Activated naive CD4-positive, alpha-beta T cell treated with anti-CD3 and anti-CD28 coated beads for 36 hours (primary cell): ENCODE measurements at regions of chr10 and their contacts with region 1.

Region 1: GRCh38 chr10:129971381-129972144 is 7.5 kb upstream of the EBF3 start:
- DNase-seq: peak; percentile 62
- H3K4me3 Mint-ChIP-seq: peak overlapping the region; percentile 52
- H3K27ac Mint-ChIP-seq: no peak overlapping the region
- H3K4me1 Mint-ChIP-seq: peaks cover 21% of the 10 kb centered on the region
- H3K27me3 Mint-ChIP-seq: peaks cover 66% of the 10 kb centered on the region

Region 2: DNA sequence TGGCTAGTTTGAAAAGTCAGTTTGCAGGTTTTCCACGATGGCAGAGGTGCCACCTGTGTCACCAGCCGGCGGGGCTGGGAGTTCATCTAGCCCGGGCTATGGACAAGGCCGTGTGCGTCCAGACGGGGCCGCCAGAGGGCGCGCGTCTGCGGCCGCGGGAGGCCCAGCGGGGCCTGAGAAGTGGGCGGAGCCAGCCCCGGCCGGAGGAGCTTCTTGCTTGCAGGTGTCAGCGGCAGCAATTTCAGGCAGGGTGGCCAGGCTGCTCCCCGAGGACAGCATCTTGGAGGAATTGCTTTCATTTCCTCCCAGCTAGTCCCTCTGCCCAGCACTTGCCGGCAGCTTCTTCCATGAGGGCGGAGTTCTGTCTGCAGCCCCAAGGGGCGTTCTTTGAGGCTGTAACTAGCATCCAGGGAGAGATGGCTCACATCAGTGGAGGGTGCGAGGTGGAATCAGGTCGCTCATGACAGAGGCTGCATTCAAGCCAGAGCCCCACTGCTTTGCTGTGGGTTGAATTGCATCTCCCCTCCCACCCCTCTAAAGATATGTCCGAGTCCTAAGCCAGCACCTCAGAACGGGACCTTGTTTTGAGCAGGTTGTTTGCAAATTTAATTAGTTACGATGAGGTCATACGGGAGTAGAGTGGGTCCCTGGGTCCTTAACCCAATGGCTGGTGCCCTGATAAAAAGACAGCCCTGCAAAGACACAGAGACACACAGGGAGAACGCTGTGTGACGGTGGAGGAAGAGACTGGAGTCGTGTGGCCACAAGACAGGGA is 1759.4 kb before region 1 on chr10:
- CTCF ChIA-PET with region 1: no interaction called
- intact Hi-C with region 1: loop called (anchors 5 kb)
- DNase-seq: peak; percentile 80
- H3K4me3 Mint-ChIP-seq: peak overlapping the region; percentile 64
- H3K27ac Mint-ChIP-seq: no peak overlapping the region
- H3K4me1 Mint-ChIP-seq: peaks cover 4% of the 10 kb centered on the region
- H3K27me3 Mint-ChIP-seq: no peaks in the 10 kb centered on the region

Region 3: DNA sequence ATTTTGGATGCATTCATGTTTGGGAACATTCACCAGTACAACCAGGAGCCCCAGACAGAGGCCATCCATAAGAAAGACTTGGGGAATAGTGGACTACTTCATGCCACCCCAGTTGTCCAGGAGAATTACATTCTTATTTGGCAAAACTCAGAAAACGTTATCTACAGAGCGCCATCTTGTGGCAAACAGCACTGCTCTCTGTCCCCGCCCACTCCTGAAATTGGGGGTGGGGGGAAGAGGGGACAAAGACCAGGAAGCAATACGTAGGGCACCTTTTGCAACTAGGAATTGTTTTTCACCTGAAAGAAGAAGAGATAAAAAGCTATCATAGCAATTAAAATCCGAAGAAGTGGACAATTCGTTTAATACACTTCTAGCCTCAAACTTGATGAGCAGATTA is 639.1 kb before region 1 on chr10:
- CTCF ChIA-PET with region 1: no interaction called
- intact Hi-C with region 1: loop called (anchors 5 kb)
- DNase-seq: peak; percentile 44
- H3K4me3 Mint-ChIP-seq: no peak overlapping the region
- H3K27ac Mint-ChIP-seq: no peak overlapping the region
- H3K4me1 Mint-ChIP-seq: peaks cover 8% of the 10 kb centered on the region
- H3K27me3 Mint-ChIP-seq: no peaks in the 10 kb centered on the region

Region 4: DNA sequence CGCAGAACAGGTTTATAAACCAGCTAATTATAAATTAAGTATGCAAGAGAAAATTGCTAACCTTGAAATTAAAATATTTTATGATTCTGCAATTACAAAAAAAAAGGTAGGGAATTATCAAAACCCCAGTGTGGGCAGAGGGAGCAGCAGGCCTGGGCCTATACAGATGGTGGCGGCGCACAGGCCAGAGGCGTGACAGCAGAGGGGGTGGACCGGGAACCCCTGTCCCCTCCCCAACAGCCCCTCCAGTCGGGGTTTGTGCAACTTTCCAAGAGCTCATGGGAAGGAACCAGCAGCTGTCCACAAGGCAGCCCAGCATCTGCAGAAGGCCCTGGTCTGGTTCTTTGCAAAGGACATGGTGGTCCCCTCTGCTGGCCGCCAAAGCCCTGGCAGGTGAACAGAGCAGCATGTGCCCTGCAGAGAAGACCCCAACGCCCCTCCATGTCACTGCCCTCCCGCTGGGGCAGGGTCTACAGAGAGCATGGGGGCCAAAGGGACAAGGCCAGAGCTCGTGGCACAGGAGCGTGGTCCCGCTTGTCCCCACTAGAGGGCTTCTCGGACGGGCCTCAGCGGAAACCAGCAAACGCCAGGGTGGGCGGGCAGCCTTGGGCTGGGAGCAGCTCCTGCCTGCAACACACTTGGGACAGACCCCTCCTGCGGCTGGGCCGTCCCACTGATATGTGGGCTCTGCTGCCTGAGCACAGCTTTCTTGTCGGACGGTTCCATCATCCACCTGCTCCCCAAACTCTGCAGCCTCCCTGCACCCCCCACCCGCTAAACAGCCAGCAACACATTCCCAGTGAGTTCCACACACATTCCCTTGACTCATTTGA is 82.6 kb before region 1 on chr10:
- CTCF ChIA-PET with region 1: interaction called, 3 read pairs
- intact Hi-C with region 1: loop called (anchors 5 kb)
- DNase-seq: peak; percentile 49
- H3K4me3 Mint-ChIP-seq: no peak overlapping the region
- H3K27ac Mint-ChIP-seq: no peak overlapping the region
- H3K4me1 Mint-ChIP-seq: no peaks in the 10 kb centered on the region
- H3K27me3 Mint-ChIP-seq: no peaks in the 10 kb centered on the region

Region 5: DNA sequence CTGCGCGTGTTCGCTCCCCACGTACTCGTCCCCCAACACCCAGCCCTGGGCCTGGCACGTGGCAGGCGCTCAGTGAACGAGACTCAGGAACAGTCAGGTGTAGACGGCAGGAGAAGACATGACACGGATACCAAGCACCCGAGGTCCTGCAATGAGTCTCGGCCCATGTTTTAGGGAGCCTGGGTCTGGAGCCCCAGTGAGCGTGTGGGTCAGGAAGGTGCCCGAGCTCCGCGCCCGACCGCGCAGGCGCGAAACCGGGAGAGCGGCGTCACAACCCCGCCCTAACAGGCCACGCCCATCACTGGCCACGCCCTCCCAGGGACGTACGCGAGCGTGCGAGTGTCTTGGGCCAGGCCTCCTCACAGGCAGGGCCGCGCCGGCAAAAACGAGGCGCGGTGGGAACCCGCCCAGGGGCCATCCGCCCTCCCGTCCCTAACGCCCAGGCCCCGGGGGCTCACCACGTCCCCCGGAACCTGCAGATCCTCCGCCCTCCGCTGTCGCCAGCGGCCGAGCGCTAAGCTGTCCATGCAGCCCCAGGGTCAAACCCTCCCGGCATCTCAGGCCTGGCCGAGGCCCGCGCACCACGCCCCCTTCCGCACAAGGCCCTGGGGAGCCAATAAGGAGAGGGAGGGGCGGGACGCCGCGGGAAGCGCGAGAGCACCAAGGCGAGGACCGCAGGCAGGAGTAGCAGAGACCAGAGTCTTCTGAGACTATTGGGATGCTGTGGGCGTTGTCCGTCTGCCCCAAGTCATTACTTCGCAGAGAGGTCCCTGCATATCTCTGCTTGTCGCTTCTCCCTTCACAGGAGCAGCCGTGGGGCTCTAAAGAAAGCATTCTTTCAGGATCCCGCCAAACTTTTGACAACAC is 138.9 kb after region 1 on chr10 and contains the start of gene C10orf143:
- CTCF ChIA-PET with region 1: interaction called, 14 read pairs
- intact Hi-C with region 1: loop called (anchors 2 kb)
- DNase-seq: peak; percentile 96
- H3K4me3 Mint-ChIP-seq: peak within 1 kb of the TSS; percentile 83
- H3K27ac Mint-ChIP-seq: peak within 1 kb of the TSS; percentile 99
- H3K4me1 Mint-ChIP-seq: peaks cover 45% of the 10 kb centered on the region
- H3K27me3 Mint-ChIP-seq: no peaks in the 10 kb centered on the region
- total RNA-seq, gene C10orf143: 3.3 to 3.5 TPM

Region 6: GRCh38 chr10:130179640-130180039 is 208.1 kb after region 1 on chr10:
- CTCF ChIA-PET with region 1: no interaction called
- intact Hi-C with region 1: loop called (anchors 1 kb)
- DNase-seq: peak; percentile 70
- H3K4me3 Mint-ChIP-seq: no peak overlapping the region
- H3K27ac Mint-ChIP-seq: no peak overlapping the region
- H3K4me1 Mint-ChIP-seq: peaks cover 5% of the 10 kb centered on the region
- H3K27me3 Mint-ChIP-seq: no peaks in the 10 kb centered on the region